Activated CD8-positive, alpha-beta T cell treated with anti-CD3 and anti-CD28 coated beads, Interleukin-2, amount 10 ng/mL, durations not matched to agents 7 days and 5 days (primary cell): ENCODE measurements at regions of chr3 and their contacts with region 1.

Region 1: GRCh38 chr3:136752422-136753325 is 496 bp upstream of the STAG1 start:
- DNase-seq: peak; percentile 99
- ATAC-seq: peak; percentile 90
- H3K4me3 Mint-ChIP-seq: peak overlapping the region; percentile 73
- H3K27ac Mint-ChIP-seq: peak overlapping the region; percentile 86
- H3K4me1 Mint-ChIP-seq: peaks cover 36% of the 10 kb centered on the region
- H3K27me3 Mint-ChIP-seq: no peaks in the 10 kb centered on the region

Region 2: GRCh38 chr3:136196401-136197158 is 556.1 kb before region 1 on chr3:
- CTCF ChIA-PET with region 1: interaction called, 33 read pairs
- POLR2A ChIA-PET with region 1: interaction called, 57 read pairs
- DNase-seq: peak; percentile 100
- ATAC-seq: peak; percentile 79
- H3K4me3 Mint-ChIP-seq: peak overlapping the region; percentile 92
- H3K27ac Mint-ChIP-seq: peak overlapping the region; percentile 95
- H3K4me1 Mint-ChIP-seq: peaks cover 19% of the 10 kb centered on the region
- H3K27me3 Mint-ChIP-seq: no peaks in the 10 kb centered on the region

Region 3: GRCh38 chr3:136350132-136350531 is 402.5 kb before region 1 on chr3:
- CTCF ChIA-PET with region 1: interaction called, 11 read pairs
- POLR2A ChIA-PET with region 1: interaction called, 3 read pairs
- DNase-seq: no peak
- ATAC-seq: no peak
- H3K4me3 Mint-ChIP-seq: no peak overlapping the region
- H3K27ac Mint-ChIP-seq: no peak overlapping the region
- H3K4me1 Mint-ChIP-seq: peaks cover 10% of the 10 kb centered on the region
- H3K27me3 Mint-ChIP-seq: no peaks in the 10 kb centered on the region

Region 4: DNA sequence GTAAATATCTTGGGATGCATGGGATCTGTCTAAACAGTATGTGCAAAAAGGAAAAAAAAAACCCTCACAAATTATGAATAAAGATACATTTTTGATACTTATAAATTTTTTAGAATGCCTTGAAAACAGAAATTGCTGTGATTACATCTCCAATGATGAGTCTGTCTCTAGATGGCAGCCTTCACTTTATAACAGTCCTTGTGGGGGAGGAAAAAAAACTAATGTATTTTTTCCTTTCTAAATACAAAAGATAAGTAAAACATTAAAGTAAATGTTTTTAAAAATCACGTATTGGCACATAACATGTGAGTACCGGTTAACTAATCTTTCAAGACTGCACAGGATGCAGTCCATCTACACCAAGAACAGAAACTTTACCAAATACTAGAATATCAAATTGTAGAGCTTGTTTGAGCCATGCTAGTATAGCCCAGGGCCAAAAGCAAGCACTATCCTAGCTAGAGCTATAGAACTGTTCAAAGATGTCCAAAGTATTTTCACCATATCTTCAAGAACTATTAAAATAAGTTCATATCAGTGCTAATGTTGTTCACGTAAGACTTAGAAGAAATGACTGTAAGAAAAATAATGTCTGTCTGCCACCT is 206.9 kb before region 1 on chr3:
- CTCF ChIA-PET with region 1: interaction called, 30 read pairs
- POLR2A ChIA-PET with region 1: interaction called, 12 read pairs
- DNase-seq: no peak
- ATAC-seq: no peak
- H3K4me3 Mint-ChIP-seq: no peak overlapping the region
- H3K27ac Mint-ChIP-seq: no peak overlapping the region
- H3K4me1 Mint-ChIP-seq: no peaks in the 10 kb centered on the region
- H3K27me3 Mint-ChIP-seq: no peaks in the 10 kb centered on the region

Region 5: DNA sequence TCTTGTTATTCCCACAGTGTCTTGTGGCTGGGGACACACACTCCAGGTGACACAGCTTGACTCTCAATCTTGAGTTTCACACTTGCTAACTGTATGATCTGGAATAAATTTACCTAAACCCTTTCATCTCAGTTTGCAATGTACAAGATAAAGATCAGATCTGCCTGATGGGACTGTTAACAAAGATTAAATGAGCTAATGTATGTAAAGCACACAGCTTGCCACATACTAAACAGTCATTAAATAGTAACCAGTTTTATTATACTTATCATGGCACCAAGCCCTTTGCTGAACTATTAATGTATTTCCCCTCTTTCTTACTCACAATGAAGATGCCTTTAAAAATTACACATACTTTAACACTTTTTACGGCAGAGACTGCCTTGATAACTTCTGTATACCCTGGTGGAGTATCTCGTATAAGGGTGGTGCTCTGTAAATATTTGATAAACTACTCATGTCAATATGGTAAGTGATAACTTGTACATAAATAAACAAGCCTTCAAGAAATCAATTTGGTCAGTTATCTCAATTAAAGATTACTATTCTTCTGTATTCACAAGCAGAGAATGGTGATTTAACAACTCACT is 185.0 kb before region 1 on chr3:
- CTCF ChIA-PET with region 1: no interaction called
- POLR2A ChIA-PET with region 1: no interaction called
- DNase-seq: no peak
- ATAC-seq: no peak
- H3K4me3 Mint-ChIP-seq: no peak overlapping the region
- H3K27ac Mint-ChIP-seq: no peak overlapping the region
- H3K4me1 Mint-ChIP-seq: no peaks in the 10 kb centered on the region
- H3K27me3 Mint-ChIP-seq: no peaks in the 10 kb centered on the region

Region 6: GRCh38 chr3:136787349-136787748 is 34.7 kb after region 1 on chr3:
- CTCF ChIA-PET with region 1: interaction called, 12 read pairs
- POLR2A ChIA-PET with region 1: interaction called, 10 read pairs
- DNase-seq: peak; percentile 42
- ATAC-seq: peak; percentile 68
- H3K4me3 Mint-ChIP-seq: no peak overlapping the region
- H3K27ac Mint-ChIP-seq: peak overlapping the region; percentile 28
- H3K4me1 Mint-ChIP-seq: peaks cover 15% of the 10 kb centered on the region
- H3K27me3 Mint-ChIP-seq: no peaks in the 10 kb centered on the region

Region 7: DNA sequence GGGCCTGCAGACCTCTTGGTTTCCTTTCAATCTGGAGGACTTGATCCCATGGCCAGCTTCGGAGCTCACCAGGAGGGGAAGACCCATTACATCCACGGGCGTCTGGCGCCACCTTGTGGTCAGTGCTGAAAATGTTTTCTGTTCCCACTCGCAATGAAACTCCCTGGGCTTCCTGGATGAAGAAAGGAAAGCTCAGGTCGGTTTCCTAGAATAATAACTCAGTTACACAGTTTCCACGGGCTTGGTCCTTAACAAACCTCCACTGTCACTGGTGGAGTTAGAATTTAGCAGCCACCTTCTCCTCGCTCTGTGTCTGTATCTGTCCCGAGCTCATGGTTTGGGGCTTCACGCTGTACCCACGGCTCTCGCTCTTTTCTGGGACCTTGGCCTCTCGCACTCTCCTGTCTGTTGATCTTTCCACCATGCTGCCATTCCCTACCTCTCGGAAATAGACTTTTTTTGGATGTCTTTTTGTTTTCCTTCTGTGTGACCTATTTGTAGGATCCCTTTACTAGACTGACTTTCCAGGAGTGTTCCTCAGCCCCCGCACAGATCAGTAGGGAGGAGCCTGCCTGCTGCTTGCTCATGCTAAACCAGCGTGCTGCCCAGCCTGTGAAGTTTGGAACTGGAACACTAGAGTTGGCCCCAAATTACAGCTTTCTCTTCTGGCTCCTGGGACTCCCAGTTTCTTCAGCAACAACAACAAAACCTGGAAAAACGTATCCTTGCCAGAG is 261.4 kb after region 1 on chr3:
- CTCF ChIA-PET with region 1: interaction called, 176 read pairs
- POLR2A ChIA-PET with region 1: interaction called, 19 read pairs
- DNase-seq: peak; percentile 85
- ATAC-seq: peak; percentile 94
- H3K4me3 Mint-ChIP-seq: peak overlapping the region; percentile 65
- H3K27ac Mint-ChIP-seq: peak overlapping the region; percentile 35
- H3K4me1 Mint-ChIP-seq: peaks cover 14% of the 10 kb centered on the region
- H3K27me3 Mint-ChIP-seq: peaks cover 2% of the 10 kb centered on the region